ENCODE measurements at regions of chr3 and their contacts with region 1.

Region 1: DNA sequence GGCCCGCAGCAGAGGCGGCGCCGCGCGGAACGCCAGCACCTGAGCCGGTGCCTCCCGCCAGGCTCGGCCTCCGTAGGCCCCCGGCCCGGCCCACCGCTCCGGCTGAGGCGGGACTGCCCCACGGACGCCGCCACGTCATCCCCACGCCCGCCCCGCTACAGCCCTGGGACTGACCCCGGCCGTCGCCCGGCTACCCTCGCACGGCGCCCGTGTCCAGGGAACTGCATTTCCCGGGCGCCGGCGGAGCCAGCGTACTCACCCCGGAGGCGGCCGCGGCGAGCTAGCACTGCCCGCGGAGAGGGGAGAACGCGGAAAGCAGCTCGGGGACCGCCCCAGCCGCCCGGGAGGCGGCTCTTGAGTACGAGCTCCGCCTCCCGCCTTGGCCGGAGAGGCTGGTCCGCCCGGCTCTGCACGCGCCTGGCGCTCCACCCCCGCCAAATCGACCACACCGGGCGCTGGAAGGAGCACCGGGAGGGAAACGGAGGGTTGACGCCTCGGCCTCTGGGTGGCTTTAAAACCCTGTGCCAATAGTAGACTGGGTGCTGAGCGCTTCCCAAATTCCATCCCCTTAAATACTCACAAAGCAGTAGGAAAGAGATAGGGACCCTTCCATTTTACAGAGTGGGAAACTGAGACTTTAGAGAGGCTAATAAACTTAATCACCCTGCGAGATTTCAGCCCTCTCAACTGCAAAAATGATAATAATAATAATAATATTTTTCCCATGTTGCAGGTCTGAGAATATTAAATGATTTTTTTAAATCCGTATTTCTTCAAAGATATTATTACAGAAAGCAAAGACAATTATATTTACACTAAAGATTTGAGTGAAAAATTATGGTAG is at the start of gene B4GALT4:
- DNase-seq: peak; percentile 75
- H3K4me3 Mint-ChIP-seq: peak within 1 kb of the TSS; percentile 87
- H3K27ac Mint-ChIP-seq: peak within 1 kb of the TSS; percentile 90
- H3K4me1 Mint-ChIP-seq: peaks cover 40% of the 10 kb centered on the region
- H3K27me3 Mint-ChIP-seq: no peaks in the 10 kb centered on the region
- total RNA-seq, gene B4GALT4: 14.1 and 18.6 TPM in 2 replicates

Region 2: DNA sequence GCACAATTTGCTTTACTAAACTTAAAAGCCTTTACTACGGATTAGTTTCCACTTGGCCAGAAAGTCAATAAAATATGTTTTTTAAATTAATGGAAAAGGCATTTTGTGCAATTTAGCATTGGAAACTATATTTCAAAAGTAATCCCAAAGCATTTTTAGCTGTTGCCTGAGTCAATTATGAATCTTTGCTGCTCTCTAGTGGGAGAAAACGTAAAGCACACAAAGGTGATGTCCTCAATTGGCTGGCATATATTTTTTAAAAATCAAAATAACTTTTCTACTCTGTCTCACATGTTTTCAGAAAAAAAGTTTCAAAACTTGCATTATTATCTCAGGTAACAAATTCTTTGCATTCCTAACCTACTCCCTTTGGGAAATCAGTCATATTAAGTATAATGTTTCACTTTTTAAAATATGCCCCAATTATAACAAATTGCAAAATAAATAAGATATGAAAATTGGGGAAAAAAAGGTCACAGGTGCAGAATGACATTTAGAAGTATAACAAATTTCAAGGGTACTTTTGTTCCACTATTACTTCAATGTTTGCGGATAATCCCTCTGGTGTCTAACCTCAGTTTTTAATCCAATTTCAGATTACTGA is 142.1 kb before region 1 on chr3:
- intact Hi-C with region 1: loop called (anchors 1 kb)
- DNase-seq: no peak
- H3K4me3 Mint-ChIP-seq: no peak overlapping the region
- H3K27ac Mint-ChIP-seq: no peak overlapping the region
- H3K4me1 Mint-ChIP-seq: no peaks in the 10 kb centered on the region
- H3K27me3 Mint-ChIP-seq: peaks cover 2% of the 10 kb centered on the region

Region 3: GRCh38 chr3:119293871-119294695 is 53.3 kb after region 1 on chr3 and contains the start of gene ARHGAP31:
- intact Hi-C with region 1: loop called (anchors 1 kb)
- DNase-seq: peak; percentile 82
- H3K4me3 Mint-ChIP-seq: peak within 1 kb of the TSS; percentile 85
- H3K27ac Mint-ChIP-seq: peak within 1 kb of the TSS; percentile 78
- H3K4me1 Mint-ChIP-seq: peaks cover 55% of the 10 kb centered on the region
- H3K27me3 Mint-ChIP-seq: peaks cover 42% of the 10 kb centered on the region
- total RNA-seq, gene ARHGAP31: 7.5 and 8.0 TPM in 2 replicates

Region 4: DNA sequence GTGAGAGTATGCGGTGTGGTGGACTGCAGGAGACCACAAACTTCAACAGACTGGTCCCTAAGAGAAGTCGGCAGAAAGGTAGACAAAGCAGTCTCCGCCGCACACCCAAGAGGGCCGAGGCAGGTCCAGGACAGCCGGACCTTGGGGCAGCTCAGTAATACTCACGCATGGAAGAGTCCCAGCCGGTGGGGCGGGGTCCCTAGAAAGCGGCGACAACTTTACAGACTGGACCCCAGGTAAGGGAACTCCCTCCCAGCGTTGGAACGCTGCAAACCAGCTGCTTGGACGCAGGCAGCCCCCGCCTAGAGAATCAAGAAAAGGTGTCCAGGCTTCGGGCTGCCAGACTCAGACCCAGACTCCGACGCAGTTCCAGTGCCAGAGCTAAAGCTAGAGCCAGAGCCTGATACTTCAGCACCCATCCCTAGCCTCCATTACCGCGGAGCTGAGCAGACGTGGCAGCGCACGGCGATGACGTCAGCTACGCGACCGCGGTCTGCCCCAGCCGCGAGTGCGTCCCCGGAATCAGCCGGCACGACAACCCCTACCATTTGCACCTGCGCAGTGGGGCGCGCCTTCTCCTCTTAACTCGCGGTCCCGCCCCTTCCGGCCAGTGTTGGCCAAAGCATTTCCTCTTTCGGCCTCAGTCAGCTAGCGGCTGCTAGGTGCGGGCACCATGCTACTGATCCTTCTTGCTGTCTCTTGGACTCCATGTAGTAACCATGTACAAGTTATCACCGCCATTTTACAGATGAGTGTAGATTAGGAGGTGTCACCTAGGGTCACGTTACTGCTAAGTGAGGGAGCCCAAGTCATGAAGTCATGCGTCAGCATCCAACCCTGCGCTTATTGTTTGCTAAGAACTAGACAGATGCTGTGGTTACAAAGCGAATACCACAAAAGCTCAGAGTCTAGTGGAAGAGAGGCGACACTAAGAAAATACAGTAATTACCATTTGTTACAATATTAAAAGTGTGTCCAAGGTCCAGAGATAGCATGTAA is 222.7 kb after region 1 on chr3 and contains the start of gene TMEM39A:
- intact Hi-C with region 1: loop called (anchors 1 kb)
- DNase-seq: peak; percentile 98
- H3K4me3 Mint-ChIP-seq: peak within 1 kb of the TSS; percentile 98
- H3K27ac Mint-ChIP-seq: peak within 1 kb of the TSS; percentile 97
- H3K4me1 Mint-ChIP-seq: peaks cover 49% of the 10 kb centered on the region
- H3K27me3 Mint-ChIP-seq: peaks cover 3% of the 10 kb centered on the region
- total RNA-seq, gene TMEM39A: 51.3 and 56.9 TPM in 2 replicates

Region 5: GRCh38 chr3:119637679-119638525 is 397.1 kb after region 1 on chr3:
- intact Hi-C with region 1: loop called (anchors 2 kb)
- DNase-seq: no peak
- H3K4me3 Mint-ChIP-seq: peak overlapping the region; percentile 47
- H3K27ac Mint-ChIP-seq: peak overlapping the region; percentile 89
- H3K4me1 Mint-ChIP-seq: peaks cover 45% of the 10 kb centered on the region
- H3K27me3 Mint-ChIP-seq: peaks cover under 1% of the 10 kb centered on the region